CD8-positive, alpha-beta memory T cell (primary cell): ENCODE measurements at regions of chr14 and their contacts with region 1.

Region 1: GRCh38 chr14:62126879-62127478 is 364.8 kb downstream of the SNAPC1 start:
- DNase-seq: peak in 2 of 5 donors; percentile 36 to 39
- H3K4me3 ChIP-seq: no peak overlapping the region
- H3K4me3 Mint-ChIP-seq: no peak overlapping the region
- H3K27ac ChIP-seq: no peak overlapping the region
- H3K27ac Mint-ChIP-seq: no peak overlapping the region
- H3K4me1 ChIP-seq: no peaks in the 10 kb centered on the region
- H3K4me1 Mint-ChIP-seq: peaks cover 0 to 5% (median 1%) of the 10 kb centered on the region in 3 donors
- H3K27me3 ChIP-seq: no peaks in the 10 kb centered on the region
- H3K27me3 Mint-ChIP-seq: peaks cover 18 to 38% of the 10 kb centered on the region in 2 donors

Region 2: DNA sequence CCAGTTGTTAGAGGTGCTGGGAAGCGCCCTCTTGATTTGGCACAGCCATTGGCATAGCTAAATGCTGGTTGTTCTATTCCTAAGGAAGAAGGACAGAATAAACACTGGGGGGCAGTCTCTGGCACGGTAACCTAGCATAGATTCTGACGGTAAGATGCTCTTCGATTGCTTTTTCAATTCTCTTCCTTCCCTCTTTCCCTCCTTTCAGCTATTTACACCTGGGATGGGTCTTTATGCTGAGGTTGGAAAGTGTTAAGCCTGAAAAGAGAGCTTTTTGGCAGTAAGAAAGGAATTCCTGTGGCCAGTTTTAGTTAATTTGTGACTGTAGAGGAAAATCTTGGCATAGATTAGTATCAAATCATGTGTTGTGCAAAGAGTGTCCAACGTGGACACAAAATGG is 201.9 kb before region 1 on chr14:
- CTCF ChIA-PET with region 1: interaction called, 22 read pairs
- POLR2A ChIA-PET with region 1: no interaction called
- DNase-seq: peak in 3 of 5 donors; percentile 4 to 46 (median 9)
- H3K4me3 ChIP-seq: no peak overlapping the region
- H3K4me3 Mint-ChIP-seq: no peak overlapping the region
- H3K27ac ChIP-seq: no peak overlapping the region
- H3K27ac Mint-ChIP-seq: no peak overlapping the region
- H3K4me1 ChIP-seq: no peaks in the 10 kb centered on the region
- H3K4me1 Mint-ChIP-seq: no peaks in the 10 kb centered on the region
- H3K27me3 ChIP-seq: no peaks in the 10 kb centered on the region
- H3K27me3 Mint-ChIP-seq: peaks cover 2 to 16% of the 10 kb centered on the region in 2 donors

Region 3: GRCh38 chr14:62206456-62206855 is 79.5 kb after region 1 on chr14:
- CTCF ChIA-PET with region 1: no interaction called
- POLR2A ChIA-PET with region 1: no interaction called
- DNase-seq: no peak
- H3K4me3 ChIP-seq: no peak overlapping the region
- H3K4me3 Mint-ChIP-seq: no peak overlapping the region
- H3K27ac ChIP-seq: no peak overlapping the region
- H3K27ac Mint-ChIP-seq: no peak overlapping the region
- H3K4me1 ChIP-seq: no peaks in the 10 kb centered on the region
- H3K4me1 Mint-ChIP-seq: no peaks in the 10 kb centered on the region
- H3K27me3 ChIP-seq: no peaks in the 10 kb centered on the region
- H3K27me3 Mint-ChIP-seq: peaks cover 3 to 25% of the 10 kb centered on the region in 2 donors